Activated CD4-positive, alpha-beta memory T cell treated with anti-CD3 and anti-CD28 coated beads for 36 hours (primary cell): ENCODE measurements at regions of chr10 and their contacts with region 1.

Region 1: DNA sequence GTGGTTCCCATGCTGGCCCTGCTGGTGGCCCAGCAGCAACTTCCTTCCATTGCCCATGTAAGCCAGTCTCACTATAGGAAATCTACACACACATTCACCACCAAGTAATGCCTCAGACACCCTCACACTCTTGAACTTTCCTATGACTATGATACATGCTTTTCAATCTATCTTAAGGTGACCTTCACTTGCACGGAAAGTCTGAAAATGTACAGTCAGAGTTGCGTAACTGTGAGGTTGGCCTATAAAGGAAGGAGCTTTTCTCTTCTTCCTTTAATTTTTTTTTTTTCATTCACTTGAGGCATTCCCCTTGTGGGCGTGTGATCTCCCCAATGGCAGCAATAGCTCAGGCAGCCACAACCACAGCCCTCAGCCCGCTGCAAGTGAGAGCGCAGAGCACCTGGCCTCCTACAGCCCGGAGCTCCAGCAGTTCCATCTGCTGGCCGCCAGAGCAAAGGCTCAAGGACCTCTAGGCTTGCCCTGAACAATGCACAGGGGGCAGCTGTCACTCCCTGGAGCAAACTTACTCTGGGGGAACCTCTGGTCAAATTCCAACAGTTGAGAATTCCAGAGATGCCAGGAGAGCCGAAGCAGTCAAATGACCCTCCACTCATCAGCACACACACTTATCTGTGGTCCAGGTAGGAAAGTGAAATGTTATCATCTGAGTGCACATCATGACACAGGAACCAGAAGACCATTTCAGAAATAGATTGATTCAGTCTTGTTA is 123.1 kb upstream of the ADO start:
- DNase-seq: peak; percentile 92
- H3K4me3 Mint-ChIP-seq: no peak overlapping the region
- H3K27ac Mint-ChIP-seq: peak overlapping the region; percentile 74
- H3K4me1 Mint-ChIP-seq: peaks cover 33% of the 10 kb centered on the region
- H3K27me3 Mint-ChIP-seq: peaks cover 2% of the 10 kb centered on the region

Region 2: GRCh38 chr10:62384057-62384446 is 297.3 kb before region 1 on chr10:
- CTCF ChIA-PET with region 1: no interaction called
- POLR2A ChIA-PET with region 1: no interaction called
- intact Hi-C with region 1: loop called (anchors 5 kb)
- DNase-seq: peak; percentile 73
- H3K4me3 Mint-ChIP-seq: no peak overlapping the region
- H3K27ac Mint-ChIP-seq: peak overlapping the region; percentile 48
- H3K4me1 Mint-ChIP-seq: peaks cover 61% of the 10 kb centered on the region
- H3K27me3 Mint-ChIP-seq: no peaks in the 10 kb centered on the region

Region 3: DNA sequence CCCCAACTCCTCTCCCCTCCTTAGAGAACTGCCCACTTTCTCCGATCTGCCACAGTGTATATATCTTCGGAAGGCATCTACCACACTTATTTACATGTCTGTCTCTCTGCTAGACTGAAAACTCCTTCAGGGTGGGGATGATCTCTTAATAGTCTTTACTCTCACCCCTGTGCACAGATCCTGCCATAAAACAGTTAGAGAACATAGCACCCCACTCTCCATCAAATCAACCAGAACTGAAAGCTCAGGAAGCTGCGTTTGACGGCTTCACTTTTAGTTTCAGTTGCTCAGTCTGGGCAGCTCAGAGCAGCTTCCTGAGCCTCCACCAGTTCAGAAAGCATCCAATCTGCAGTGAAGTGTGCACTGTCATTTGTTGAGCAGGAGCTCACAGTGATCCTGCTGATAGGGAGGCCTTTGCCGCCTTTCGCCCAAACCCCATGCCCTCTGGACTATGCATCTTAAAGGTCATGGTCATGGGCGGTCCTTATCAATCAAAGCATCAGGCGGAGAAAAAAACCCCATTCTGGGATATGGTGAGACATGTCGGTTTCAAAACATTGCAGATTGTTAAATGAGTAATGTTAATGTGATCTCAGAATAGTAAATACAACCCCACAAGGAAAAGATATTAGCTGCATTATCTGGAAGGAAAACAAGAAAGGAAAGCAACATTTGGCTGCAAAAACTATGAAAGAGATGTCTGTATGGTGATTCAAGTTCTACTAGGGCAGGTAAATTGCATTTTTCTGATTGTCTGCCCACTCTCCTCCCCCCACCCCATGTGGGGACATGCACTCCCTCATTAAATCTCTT is 43.9 kb before region 1 on chr10:
- CTCF ChIA-PET with region 1: interaction called, 5 read pairs
- POLR2A ChIA-PET with region 1: interaction called, 24 read pairs
- intact Hi-C with region 1: loop called (anchors 1 kb)
- DNase-seq: peak; percentile 84
- H3K4me3 Mint-ChIP-seq: no peak overlapping the region
- H3K27ac Mint-ChIP-seq: no peak overlapping the region
- H3K4me1 Mint-ChIP-seq: peaks cover 26% of the 10 kb centered on the region
- H3K27me3 Mint-ChIP-seq: no peaks in the 10 kb centered on the region

Region 4: GRCh38 chr10:62655337-62655994 is 25.9 kb before region 1 on chr10:
- CTCF ChIA-PET with region 1: no interaction called
- POLR2A ChIA-PET with region 1: interaction called, 3 read pairs
- intact Hi-C with region 1: loop called (anchors 1 kb)
- DNase-seq: peak; percentile 72
- H3K4me3 Mint-ChIP-seq: no peak overlapping the region
- H3K27ac Mint-ChIP-seq: no peak overlapping the region
- H3K4me1 Mint-ChIP-seq: peaks cover 28% of the 10 kb centered on the region
- H3K27me3 Mint-ChIP-seq: no peaks in the 10 kb centered on the region

Region 5: DNA sequence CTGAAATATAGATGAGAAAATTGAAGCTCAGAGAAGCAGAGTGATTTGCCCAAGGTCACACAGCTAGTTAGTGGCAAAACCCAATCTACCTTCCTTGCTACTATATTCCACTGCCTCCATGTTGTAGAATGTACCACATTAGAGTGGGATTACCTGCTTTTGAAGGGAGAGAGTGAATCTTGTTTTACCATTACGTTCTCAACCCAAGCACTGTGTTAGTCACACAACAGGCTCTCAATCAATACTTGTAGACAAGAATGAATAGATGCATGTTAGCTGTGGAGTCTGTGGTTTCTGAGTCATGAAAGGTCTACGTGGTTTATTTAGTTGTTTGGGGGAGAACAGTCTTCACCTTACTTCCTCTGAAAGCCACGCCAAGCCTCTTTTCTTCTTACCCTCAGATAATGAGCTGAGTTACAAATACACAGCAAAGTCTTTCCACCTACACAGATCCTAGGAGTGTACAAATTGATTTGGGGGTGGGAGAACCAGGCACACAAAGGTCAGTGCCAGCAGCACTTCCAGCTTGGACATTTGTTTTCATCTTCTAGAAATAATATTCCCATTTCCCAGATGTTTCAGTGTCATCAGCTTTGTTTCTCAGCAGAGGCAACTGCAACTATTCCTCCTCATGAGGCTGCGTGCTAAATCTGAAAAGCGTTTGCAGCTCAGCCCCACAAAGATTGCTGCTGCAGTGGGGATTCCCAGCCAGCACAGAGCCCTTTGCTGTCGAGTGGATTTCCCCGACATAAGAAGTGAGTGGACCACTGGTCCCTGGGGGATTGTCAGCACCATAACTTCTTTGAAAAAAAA is 51.7 kb after region 1 on chr10:
- CTCF ChIA-PET with region 1: interaction called, 9 read pairs
- POLR2A ChIA-PET with region 1: interaction called, 25 read pairs
- intact Hi-C with region 1: loop called (anchors 1 kb)
- DNase-seq: peak; percentile 71
- H3K4me3 Mint-ChIP-seq: no peak overlapping the region
- H3K27ac Mint-ChIP-seq: no peak overlapping the region
- H3K4me1 Mint-ChIP-seq: peaks cover 19% of the 10 kb centered on the region
- H3K27me3 Mint-ChIP-seq: peaks cover 3% of the 10 kb centered on the region

Region 6: DNA sequence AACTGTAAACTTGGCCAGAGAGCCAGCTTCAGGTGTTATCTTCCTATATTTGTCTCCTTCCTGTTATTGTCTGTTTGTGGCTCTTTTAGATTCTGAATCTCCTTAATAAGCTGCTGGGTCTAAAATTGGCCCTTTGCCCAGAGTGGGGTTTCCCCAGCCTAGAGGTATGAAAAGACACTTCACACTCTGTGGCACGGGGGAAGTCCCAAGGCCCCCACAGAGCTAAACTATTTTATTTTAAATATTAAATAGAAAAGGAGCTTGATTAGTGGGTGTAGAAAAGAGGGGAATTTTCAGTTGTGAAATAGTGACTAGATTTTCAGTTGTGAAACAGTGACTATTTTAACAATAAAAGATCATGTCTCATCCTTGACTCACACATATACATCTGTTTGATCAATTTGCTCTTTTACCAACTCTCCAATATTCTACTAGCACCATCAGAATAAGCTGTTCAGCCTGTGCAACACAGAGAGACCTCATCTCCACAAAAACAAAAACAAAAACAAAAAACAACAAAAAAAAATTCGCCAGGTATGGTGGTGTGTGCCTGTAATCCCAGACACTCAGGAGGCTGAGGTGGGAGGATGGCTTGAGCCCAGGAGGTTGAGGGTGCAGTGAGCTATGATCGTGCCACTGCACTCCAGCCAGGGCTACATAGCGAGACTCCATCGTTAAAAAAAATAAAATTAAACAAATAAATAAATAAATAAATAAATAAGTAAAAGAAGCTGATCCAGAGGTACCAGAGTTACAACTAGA is 98.3 kb after region 1 on chr10:
- CTCF ChIA-PET with region 1: interaction called, 4 read pairs
- POLR2A ChIA-PET with region 1: interaction called, 6 read pairs
- intact Hi-C with region 1: loop called (anchors 2 kb)
- DNase-seq: peak; percentile 89
- H3K4me3 Mint-ChIP-seq: no peak overlapping the region
- H3K27ac Mint-ChIP-seq: no peak overlapping the region
- H3K4me1 Mint-ChIP-seq: peaks cover 22% of the 10 kb centered on the region
- H3K27me3 Mint-ChIP-seq: peaks cover 1% of the 10 kb centered on the region

Region 7: GRCh38 chr10:62811159-62811875 is 129.9 kb after region 1 on chr10:
- CTCF ChIA-PET with region 1: interaction called, 31 read pairs
- POLR2A ChIA-PET with region 1: interaction called, 12 read pairs
- intact Hi-C with region 1: loop called (anchors 1 kb)
- DNase-seq: peak; percentile 94
- H3K4me3 Mint-ChIP-seq: peak overlapping the region; percentile 88
- H3K27ac Mint-ChIP-seq: peak overlapping the region; percentile 88
- H3K4me1 Mint-ChIP-seq: peaks cover 79% of the 10 kb centered on the region
- H3K27me3 Mint-ChIP-seq: no peaks in the 10 kb centered on the region

Region 8: DNA sequence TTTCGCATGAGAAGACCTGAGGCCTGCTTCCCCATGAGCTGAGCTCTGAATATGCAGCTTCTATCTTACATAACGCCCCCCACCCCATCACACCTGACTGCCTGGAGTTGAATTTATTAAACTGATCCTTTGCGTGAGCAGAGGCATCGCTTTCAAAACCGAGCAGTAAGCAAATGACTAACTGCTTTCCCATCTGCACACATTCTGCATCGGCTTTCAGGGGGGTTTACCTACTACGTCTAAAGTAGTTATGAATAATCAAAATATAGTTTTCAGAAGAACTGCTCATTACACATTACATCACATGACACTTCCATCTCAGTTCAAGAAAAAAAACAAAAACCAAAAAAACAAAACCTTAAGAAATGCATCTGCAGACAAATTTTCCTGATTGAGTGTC is 189.5 kb after region 1 on chr10:
- CTCF ChIA-PET with region 1: no interaction called
- POLR2A ChIA-PET with region 1: no interaction called
- intact Hi-C with region 1: no loop called
- DNase-seq: peak; percentile 68
- H3K4me3 Mint-ChIP-seq: no peak overlapping the region
- H3K27ac Mint-ChIP-seq: no peak overlapping the region
- H3K4me1 Mint-ChIP-seq: peaks cover 30% of the 10 kb centered on the region
- H3K27me3 Mint-ChIP-seq: peaks cover 16% of the 10 kb centered on the region

Region 9: DNA sequence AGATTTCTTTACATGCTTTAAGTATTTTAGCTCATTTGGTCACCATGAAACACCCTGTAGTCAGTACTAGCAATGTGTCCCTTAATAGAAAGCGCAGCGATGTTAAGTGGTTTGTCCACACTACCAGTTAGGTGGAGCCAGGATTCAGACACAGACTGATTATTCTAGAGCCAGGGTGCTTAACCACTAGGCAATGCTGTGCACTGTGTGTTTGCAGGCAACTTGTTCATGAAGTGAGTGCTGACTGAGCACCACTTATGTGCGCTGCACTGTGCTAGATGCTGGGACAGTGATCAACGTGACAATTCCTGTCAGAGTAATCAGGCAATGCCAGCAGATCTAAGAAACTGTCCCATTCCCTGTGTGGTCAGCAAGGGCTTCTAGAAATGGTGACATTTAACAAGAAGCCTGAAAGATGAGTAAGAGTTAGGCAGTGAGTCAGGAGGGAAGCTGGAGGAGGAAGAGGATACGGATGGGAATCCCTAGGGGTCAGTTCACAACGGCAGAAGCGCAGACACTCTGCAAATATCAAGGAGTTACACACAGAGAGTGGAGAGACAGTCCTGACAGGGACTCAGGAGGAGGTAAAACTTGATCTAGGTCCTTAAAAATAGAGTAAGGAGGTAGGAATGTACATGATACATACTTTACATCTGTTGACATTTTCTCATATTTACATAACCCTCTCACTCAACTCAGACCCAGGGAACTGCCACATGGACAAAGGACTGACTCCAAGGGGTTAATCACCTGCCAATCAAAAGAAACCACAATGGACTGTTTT is 204.5 kb after region 1 on chr10:
- CTCF ChIA-PET with region 1: no interaction called
- POLR2A ChIA-PET with region 1: no interaction called
- intact Hi-C with region 1: no loop called
- DNase-seq: no peak
- H3K4me3 Mint-ChIP-seq: no peak overlapping the region
- H3K27ac Mint-ChIP-seq: no peak overlapping the region
- H3K4me1 Mint-ChIP-seq: no peaks in the 10 kb centered on the region
- H3K27me3 Mint-ChIP-seq: peaks cover 30% of the 10 kb centered on the region